ENCODE measurements at regions of chr17 and their contacts with region 1.

Region 1: GRCh38 chr17:807523-808294 is 25.6 kb downstream of the MRM3 start:
- DNase-seq: no peak
- ATAC-seq: no peak
- H3K4me3 ChIP-seq: no peak overlapping the region
- H3K27ac ChIP-seq: no peak overlapping the region
- H3K4me1 ChIP-seq: no peaks in the 10 kb centered on the region
- H3K27me3 ChIP-seq: no peaks in the 10 kb centered on the region
- CTCF ChIP-seq: no peak

Region 2: GRCh38 chr17:846901-847843 is 39.5 kb after region 1 on chr17:
- CTCF ChIA-PET with region 1: no interaction called
- POLR2A ChIA-PET with region 1: interaction called, 12 read pairs
- intact Hi-C with region 1: no loop called
- DNase-seq: peak; percentile 17
- ATAC-seq: peak; percentile 43; the same call in 1 of the 2 replicates
- H3K4me3 ChIP-seq: peak overlapping the region; percentile 48
- H3K27ac ChIP-seq: no peak overlapping the region
- H3K4me1 ChIP-seq: no peaks in the 10 kb centered on the region
- H3K27me3 ChIP-seq: no peaks in the 10 kb centered on the region
- CTCF ChIP-seq: no peak